CD8-positive, alpha-beta T cell (primary cell): ENCODE measurements at regions of chr20 and their contacts with region 1.

Region 1: DNA sequence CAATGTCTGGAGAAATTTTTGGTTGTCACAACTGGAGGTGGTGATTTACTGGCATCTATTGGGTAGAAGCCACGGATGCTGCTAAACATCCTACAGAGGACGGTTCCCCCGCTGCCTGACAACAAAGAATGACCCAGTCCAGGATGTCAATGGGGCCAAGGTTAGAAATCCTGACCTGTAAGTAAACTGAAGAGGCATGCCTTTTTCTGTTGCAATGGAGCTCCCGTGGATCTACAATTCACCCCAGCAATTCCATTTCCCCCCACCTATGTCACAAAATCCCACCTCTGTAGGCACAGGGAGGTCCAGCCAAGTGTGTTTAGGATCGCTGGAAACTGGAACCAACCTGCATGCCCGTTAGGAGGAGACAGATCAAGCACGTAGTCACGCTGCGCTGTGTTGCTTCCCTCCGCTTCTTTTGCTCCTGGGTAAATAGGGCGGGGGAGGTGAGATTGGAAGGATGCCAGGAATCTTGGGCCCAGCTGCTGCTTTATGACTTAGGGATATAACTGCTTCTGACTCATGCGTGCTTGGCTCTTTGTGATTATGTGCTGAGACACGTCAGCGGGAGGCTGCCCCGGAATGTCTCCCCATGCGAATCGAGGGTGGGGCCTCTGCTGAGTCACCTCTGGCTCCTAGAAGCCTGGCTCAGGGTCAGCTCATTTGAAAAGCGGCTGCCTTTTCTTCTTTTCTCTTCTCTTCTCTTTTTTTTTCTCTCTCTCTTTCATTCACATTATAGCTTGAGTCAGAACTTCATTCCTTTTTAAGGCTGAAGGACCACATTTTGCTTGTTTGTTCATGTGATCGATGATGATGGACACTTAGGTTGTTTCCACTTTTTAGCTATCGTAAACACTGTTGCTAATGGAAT is 12.4 kb upstream of the PEDS1 start:
- DNase-seq: peak; percentile 22 to 80 (median 72)
- ATAC-seq: peak; percentile 90
- H3K4me3 ChIP-seq: peak overlapping the region in 1 of 2 experiments; percentile 3
- H3K4me3 Mint-ChIP-seq: peak overlapping the region; percentile 50
- H3K27ac ChIP-seq: no peak overlapping the region
- H3K27ac Mint-ChIP-seq: no peak overlapping the region
- H3K4me1 ChIP-seq: peaks cover 8% of the 10 kb centered on the region
- H3K4me1 Mint-ChIP-seq: peaks cover 11% of the 10 kb centered on the region
- H3K27me3 ChIP-seq: no peaks in the 10 kb centered on the region
- H3K27me3 Mint-ChIP-seq: peaks cover 5% of the 10 kb centered on the region
- CTCF ChIP-seq: no peak

Region 2: DNA sequence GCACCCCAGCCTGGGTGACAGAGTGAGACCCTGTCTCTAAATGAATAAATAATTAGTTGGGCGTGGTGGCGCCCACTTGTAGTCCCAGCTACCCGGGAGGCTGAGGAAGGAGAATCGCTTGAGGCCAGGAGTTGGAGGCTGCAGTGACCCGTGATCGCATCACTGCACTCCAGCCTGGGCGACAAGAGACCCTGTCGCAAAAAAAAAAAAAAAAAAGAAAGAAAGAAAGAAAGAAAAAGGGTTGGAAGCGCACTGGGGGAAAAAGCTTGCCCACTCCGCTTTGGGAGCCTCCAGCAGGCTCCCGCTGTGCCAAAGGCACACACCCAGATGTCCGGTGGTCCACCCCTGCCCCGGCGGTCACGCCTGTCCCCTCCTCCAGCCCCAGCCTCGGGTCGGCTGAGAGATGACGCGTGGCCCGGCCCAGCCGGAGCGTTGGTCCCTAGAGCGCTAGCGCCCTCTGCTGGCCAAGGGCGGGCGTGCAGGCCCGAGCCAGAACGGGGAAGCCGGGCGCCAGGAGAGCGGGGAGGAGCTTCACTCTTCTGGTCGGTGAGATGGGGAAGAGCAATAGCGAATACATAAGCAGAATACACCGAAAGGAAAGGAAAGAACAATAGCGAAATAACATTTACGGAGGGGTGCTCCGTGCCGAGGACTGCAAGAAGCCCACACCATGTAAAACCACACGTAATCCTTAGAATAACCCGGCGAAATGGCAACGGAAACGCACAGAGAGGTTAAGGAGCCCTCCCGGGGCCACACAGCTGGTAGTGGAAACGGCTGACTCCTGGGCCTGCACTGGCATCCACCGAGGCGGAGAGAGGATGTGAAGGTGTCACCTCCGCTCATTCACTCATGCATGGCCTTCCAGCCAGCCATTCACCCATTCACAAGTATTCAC is 94.7 kb before region 1 on chr20:
- CTCF ChIA-PET with region 1: interaction called, 24 read pairs
- POLR2A ChIA-PET with region 1: no interaction called
- intact Hi-C with region 1: loop called in 1 of 2 experiments (anchors 1 kb)
- DNase-seq: peak; percentile 83 to 98 (median 91)
- ATAC-seq: peak; percentile 100
- H3K4me3 ChIP-seq: peak overlapping the region; percentile 29 to 38
- H3K4me3 Mint-ChIP-seq: peak overlapping the region; percentile 63
- H3K27ac ChIP-seq: no peak overlapping the region
- H3K27ac Mint-ChIP-seq: no peak overlapping the region
- H3K4me1 ChIP-seq: no peaks in the 10 kb centered on the region
- H3K4me1 Mint-ChIP-seq: peaks cover 4% of the 10 kb centered on the region
- H3K27me3 ChIP-seq: no peaks in the 10 kb centered on the region
- H3K27me3 Mint-ChIP-seq: no peaks in the 10 kb centered on the region
- CTCF ChIP-seq: peak; percentile 98

Region 3: DNA sequence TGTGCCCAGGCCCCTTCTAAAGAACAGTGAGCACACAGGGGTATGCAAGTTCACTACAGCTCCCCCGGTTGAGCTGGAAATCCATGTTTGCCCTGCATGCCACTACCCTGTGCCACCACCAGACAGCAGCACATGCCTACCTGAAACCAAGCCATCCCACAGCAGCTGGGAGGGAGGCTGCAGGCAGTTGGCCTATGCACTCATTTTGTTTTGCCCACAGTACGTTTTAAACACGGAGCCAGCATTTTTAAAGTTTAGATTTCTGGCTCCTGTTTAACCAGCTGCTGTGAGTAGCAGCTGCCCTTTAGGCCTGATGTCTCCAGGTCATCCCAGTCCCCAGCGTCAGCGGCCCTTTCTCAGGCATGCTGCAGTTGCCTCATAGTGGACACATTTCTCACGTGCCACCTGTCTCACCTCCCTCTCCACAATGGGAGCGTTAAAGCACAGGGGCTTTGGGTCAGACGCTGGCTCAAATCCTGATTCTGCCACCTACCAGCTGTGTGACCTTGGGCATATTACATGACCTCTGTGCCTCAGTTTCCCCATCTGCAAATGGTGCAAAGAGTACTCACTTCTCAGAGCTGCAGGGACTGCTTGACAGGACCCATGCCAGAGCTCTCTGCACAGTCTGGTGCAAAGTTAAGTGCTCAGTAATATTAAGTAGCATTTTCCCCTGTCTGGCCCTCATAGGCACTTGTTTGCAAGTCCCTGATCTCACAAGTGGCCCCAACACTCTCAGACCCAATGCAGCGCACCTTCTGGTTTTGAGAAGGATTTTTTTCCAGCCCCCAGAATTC is 44.8 kb before region 1 on chr20:
- CTCF ChIA-PET with region 1: interaction called, 291 read pairs
- POLR2A ChIA-PET with region 1: interaction called, 12 read pairs
- intact Hi-C with region 1: loop called (anchors 1 kb)
- DNase-seq: peak; percentile 39 to 81 (median 65)
- ATAC-seq: peak; percentile 86
- H3K4me3 ChIP-seq: no peak overlapping the region
- H3K4me3 Mint-ChIP-seq: no peak overlapping the region
- H3K27ac ChIP-seq: no peak overlapping the region
- H3K27ac Mint-ChIP-seq: no peak overlapping the region
- H3K4me1 ChIP-seq: peaks cover 8% of the 10 kb centered on the region
- H3K4me1 Mint-ChIP-seq: peaks cover 8% of the 10 kb centered on the region
- H3K27me3 ChIP-seq: no peaks in the 10 kb centered on the region
- H3K27me3 Mint-ChIP-seq: no peaks in the 10 kb centered on the region
- CTCF ChIP-seq: peak; percentile 76

Region 4: GRCh38 chr20:50146732-50147662 is 18.9 kb before region 1 on chr20:
- CTCF ChIA-PET with region 1: interaction called, 103 read pairs
- POLR2A ChIA-PET with region 1: interaction called, 4 read pairs
- intact Hi-C with region 1: loop called in 1 of 2 experiments (anchors 2 kb)
- DNase-seq: peak; percentile 55 to 94 (median 79)
- ATAC-seq: peak; percentile 100
- H3K4me3 ChIP-seq: peak overlapping the region; percentile 32 to 34
- H3K4me3 Mint-ChIP-seq: peak overlapping the region; percentile 79
- H3K27ac ChIP-seq: peak overlapping the region; percentile 87 to 93
- H3K27ac Mint-ChIP-seq: peak overlapping the region; percentile 97
- H3K4me1 ChIP-seq: peaks cover 48% of the 10 kb centered on the region
- H3K4me1 Mint-ChIP-seq: peaks cover 65% of the 10 kb centered on the region
- H3K27me3 ChIP-seq: no peaks in the 10 kb centered on the region
- H3K27me3 Mint-ChIP-seq: no peaks in the 10 kb centered on the region
- CTCF ChIP-seq: no peak

Region 5: GRCh38 chr20:50179507-50180016 is 13.6 kb after region 1 on chr20:
- CTCF ChIA-PET with region 1: interaction called, 37 read pairs
- POLR2A ChIA-PET with region 1: no interaction called
- intact Hi-C with region 1: no loop called
- DNase-seq: no peak
- ATAC-seq: peak; percentile 24
- H3K4me3 ChIP-seq: no peak overlapping the region
- H3K4me3 Mint-ChIP-seq: no peak overlapping the region
- H3K27ac ChIP-seq: no peak overlapping the region
- H3K27ac Mint-ChIP-seq: no peak overlapping the region
- H3K4me1 ChIP-seq: no peaks in the 10 kb centered on the region
- H3K4me1 Mint-ChIP-seq: no peaks in the 10 kb centered on the region
- H3K27me3 ChIP-seq: no peaks in the 10 kb centered on the region
- H3K27me3 Mint-ChIP-seq: peaks cover 7% of the 10 kb centered on the region
- CTCF ChIP-seq: peak; percentile 58